Activated T-helper 2 cell treated with anti-CD3 and anti-CD28 coated beads, Interferon-gamma antibody, Interleukin-2, Interleukin-4, amounts not matched to agents 10 μg/mL and 5 μg/mL and 100 μg/mL, durations not matched to agents 14 hours and 24 hours and 36 hours (primary cell): ENCODE measurements at regions of chr17 and their contacts with region 1.

Region 1: DNA sequence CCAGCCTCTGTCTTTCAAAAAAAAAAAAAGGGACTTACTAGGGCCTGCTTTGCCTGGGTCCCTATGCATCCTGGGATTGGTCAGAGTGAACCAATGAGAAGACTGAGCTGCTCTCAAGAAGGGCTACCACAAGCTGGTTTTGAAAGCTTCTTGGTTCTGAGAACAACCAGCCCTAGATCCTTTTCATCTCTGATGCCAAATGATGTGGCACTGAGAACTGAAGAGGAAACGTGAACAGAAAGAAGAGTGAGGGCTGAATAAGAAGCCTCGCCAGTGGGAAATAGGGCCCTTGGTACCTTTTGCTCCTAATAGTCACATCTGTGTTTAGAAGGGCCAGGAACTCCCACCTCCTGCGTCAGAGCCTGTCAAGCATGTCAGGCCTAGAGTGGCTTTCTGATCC is 10.7 kb downstream of the TACO1 start:
- DNase-seq: no peak
- H3K4me3 Mint-ChIP-seq: no peak overlapping the region
- H3K27ac Mint-ChIP-seq: peak overlapping the region; percentile 68
- H3K4me1 Mint-ChIP-seq: peaks cover 8% of the 10 kb centered on the region
- H3K27me3 Mint-ChIP-seq: no peaks in the 10 kb centered on the region

Region 2: GRCh38 chr17:63425482-63425881 is 185.9 kb before region 1 on chr17:
- intact Hi-C with region 1: loop called (anchors 1 kb)
- DNase-seq: peak; percentile 47
- H3K4me3 Mint-ChIP-seq: no peak overlapping the region
- H3K27ac Mint-ChIP-seq: no peak overlapping the region
- H3K4me1 Mint-ChIP-seq: peaks cover 21% of the 10 kb centered on the region
- H3K27me3 Mint-ChIP-seq: peaks cover 15% of the 10 kb centered on the region